ENCODE measurements at regions of chr9 and their contacts with region 1.

Region 1: GRCh38 chr9:114696814-114697544 is 15.0 kb upstream of the TEX48 start:
- DNase-seq: peak; percentile 88
- H3K4me3 Mint-ChIP-seq: peak overlapping the region; percentile 42
- H3K27ac Mint-ChIP-seq: peak overlapping the region; percentile 99
- H3K4me1 Mint-ChIP-seq: peaks cover 87% of the 10 kb centered on the region
- H3K27me3 Mint-ChIP-seq: peaks cover 2% of the 10 kb centered on the region

Region 2: DNA sequence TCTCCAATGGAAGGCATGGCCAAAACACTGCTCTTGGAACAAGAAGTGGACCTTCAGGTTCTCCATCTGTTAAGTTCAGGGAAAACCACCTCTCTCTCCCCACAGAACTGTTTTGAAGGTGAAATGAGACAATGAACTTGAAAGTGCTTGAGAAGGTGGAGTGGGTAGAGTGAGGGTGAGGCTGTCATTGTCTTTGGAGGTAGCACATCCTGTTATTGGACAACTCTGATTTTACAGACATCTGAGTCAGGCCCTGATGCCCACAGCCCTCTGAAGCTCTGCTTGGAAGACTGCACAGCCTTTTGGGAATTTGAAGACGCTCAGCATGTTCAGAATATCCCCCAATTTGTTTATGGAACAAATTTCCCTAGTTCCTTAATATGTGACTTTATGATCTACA is 12.7 kb after region 1 on chr9:
- CTCF ChIA-PET with region 1: interaction called, 3 read pairs
- POLR2A ChIA-PET with region 1: interaction called, 14 read pairs
- intact Hi-C with region 1: loop called (anchors 1 kb)
- DNase-seq: no peak
- H3K4me3 Mint-ChIP-seq: no peak overlapping the region
- H3K27ac Mint-ChIP-seq: peak overlapping the region; percentile 38
- H3K4me1 Mint-ChIP-seq: peaks cover 36% of the 10 kb centered on the region
- H3K27me3 Mint-ChIP-seq: no peaks in the 10 kb centered on the region

Region 3: GRCh38 chr9:114718801-114719221 is 21.8 kb after region 1 on chr9:
- CTCF ChIA-PET with region 1: interaction called, 11 read pairs
- POLR2A ChIA-PET with region 1: interaction called, 57 read pairs
- intact Hi-C with region 1: loop called (anchors 1 kb)
- DNase-seq: peak; percentile 97
- H3K4me3 Mint-ChIP-seq: peak overlapping the region; percentile 17
- H3K27ac Mint-ChIP-seq: peak overlapping the region; percentile 80
- H3K4me1 Mint-ChIP-seq: peaks cover 63% of the 10 kb centered on the region
- H3K27me3 Mint-ChIP-seq: no peaks in the 10 kb centered on the region

Region 4: DNA sequence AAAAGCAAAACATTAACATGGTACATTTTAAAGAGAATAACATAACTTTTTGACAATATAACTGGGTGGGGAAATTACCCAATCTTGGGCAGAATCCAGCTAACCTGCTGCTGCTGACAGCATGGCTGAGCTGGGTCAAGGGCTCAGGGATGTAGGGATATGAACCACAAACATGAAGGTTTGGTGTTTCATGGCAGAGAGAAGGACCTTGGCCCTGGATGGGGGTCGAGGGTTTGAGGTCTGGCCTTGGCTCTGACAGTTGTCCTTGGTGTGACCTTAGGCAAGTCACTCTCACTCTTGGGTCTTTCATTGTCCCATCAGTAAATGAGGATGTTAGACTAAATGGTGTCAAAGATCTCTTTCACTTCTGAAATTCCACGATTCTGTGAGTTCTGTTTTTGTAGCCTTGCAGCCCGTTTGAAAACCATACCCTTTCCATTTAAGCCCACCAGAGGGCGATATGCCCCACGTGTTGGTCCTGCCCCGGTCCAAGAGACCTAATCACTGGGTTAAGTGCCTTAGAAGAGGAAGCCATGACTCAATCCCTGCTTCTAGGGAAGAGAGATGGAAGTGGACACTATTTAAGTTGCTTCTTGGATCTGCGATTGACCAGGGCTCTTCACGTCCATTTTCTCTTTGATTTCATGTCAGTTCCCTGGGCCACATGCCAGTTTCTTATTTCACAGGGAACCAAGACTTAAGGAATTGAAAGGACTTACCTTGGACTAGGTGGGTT is 41.8 kb after region 1 on chr9:
- CTCF ChIA-PET with region 1: interaction called, 19 read pairs
- POLR2A ChIA-PET with region 1: interaction called, 24 read pairs
- intact Hi-C with region 1: loop called (anchors 1 kb)
- DNase-seq: peak; percentile 81
- H3K4me3 Mint-ChIP-seq: no peak overlapping the region
- H3K27ac Mint-ChIP-seq: peak overlapping the region; percentile 81
- H3K4me1 Mint-ChIP-seq: peaks cover 52% of the 10 kb centered on the region
- H3K27me3 Mint-ChIP-seq: no peaks in the 10 kb centered on the region

Region 5: GRCh38 chr9:115204904-115205453 is 508.0 kb after region 1 on chr9:
- CTCF ChIA-PET with region 1: no interaction called
- POLR2A ChIA-PET with region 1: no interaction called
- intact Hi-C with region 1: loop called (anchors 5 kb)
- DNase-seq: no peak
- H3K4me3 Mint-ChIP-seq: no peak overlapping the region
- H3K27ac Mint-ChIP-seq: no peak overlapping the region
- H3K4me1 Mint-ChIP-seq: peaks cover 27% of the 10 kb centered on the region
- H3K27me3 Mint-ChIP-seq: peaks cover 46% of the 10 kb centered on the region

Measured in activated CD4-positive, alpha-beta memory T cell treated with anti-CD3 and anti-CD28 coated beads for 36 hours (primary cell).